Gastrocnemius medialis (tissue), 4 donors: ENCODE measurements at regions of chr16 and their contacts with region 1.

Region 1: GRCh38 chr16:87842209-87842869 is 27.0 kb downstream of the SLC7A5 start:
- DNase-seq: no peak
- ATAC-seq: no peak
- H3K4me3 ChIP-seq: no peak overlapping the region
- H3K27ac ChIP-seq: no peak overlapping the region
- H3K4me1 ChIP-seq: peaks cover 7 to 30% of the 10 kb centered on the region in 2 donors
- H3K27me3 ChIP-seq: no peaks in the 10 kb centered on the region
- CTCF ChIP-seq: no peak
- POLR2A ChIP-seq: no peak

Region 2: GRCh38 chr16:87757915-87758314 is 84.4 kb before region 1 on chr16:
- in situ Hi-C with region 1: no loop called
- intact Hi-C with region 1: no loop called
- DNase-seq: no peak
- ATAC-seq: no peak
- H3K4me3 ChIP-seq: no peak overlapping the region
- H3K27ac ChIP-seq: no peak overlapping the region
- H3K4me1 ChIP-seq: no peaks in the 10 kb centered on the region
- H3K27me3 ChIP-seq: no peaks in the 10 kb centered on the region
- CTCF ChIP-seq: no peak
- POLR2A ChIP-seq: no peak

Region 3: GRCh38 chr16:87778830-87779579 is 63.3 kb before region 1 on chr16:
- in situ Hi-C with region 1: no loop called
- intact Hi-C with region 1: no loop called
- DNase-seq: peak; percentile 67 to 84
- ATAC-seq: peak; percentile 79 to 90
- H3K4me3 ChIP-seq: no peak overlapping the region
- H3K27ac ChIP-seq: peak overlapping the region in 2 of 4 donors; percentile 15 to 21
- H3K4me1 ChIP-seq: peaks cover 5 to 10% of the 10 kb centered on the region in 2 donors
- H3K27me3 ChIP-seq: peaks cover 0 to 3% (median 0%) of the 10 kb centered on the region in 3 donors
- CTCF ChIP-seq: peak; percentile 96 to 100 (median 97)
- POLR2A ChIP-seq: no peak

Region 4: GRCh38 chr16:87828071-87828971 is 14.0 kb before region 1 on chr16:
- in situ Hi-C with region 1: no loop called
- intact Hi-C with region 1: loop called (anchors 1 kb)
- DNase-seq: no peak
- ATAC-seq: peak in 1 of 2 donors; percentile 13
- H3K4me3 ChIP-seq: no peak overlapping the region
- H3K27ac ChIP-seq: no peak overlapping the region
- H3K4me1 ChIP-seq: no peaks in the 10 kb centered on the region
- H3K27me3 ChIP-seq: no peaks in the 10 kb centered on the region
- CTCF ChIP-seq: no peak
- POLR2A ChIP-seq: peak in 1 of 2 donors; percentile 5

Region 5: GRCh38 chr16:88063211-88063773 is 221.0 kb after region 1 on chr16:
- in situ Hi-C with region 1: no loop called
- intact Hi-C with region 1: no loop called
- DNase-seq: no peak
- ATAC-seq: peak; percentile 29 to 42
- H3K4me3 ChIP-seq: no peak overlapping the region
- H3K27ac ChIP-seq: no peak overlapping the region
- H3K4me1 ChIP-seq: peaks cover 7 to 16% of the 10 kb centered on the region in 2 donors
- H3K27me3 ChIP-seq: no peaks in the 10 kb centered on the region
- CTCF ChIP-seq: no peak
- POLR2A ChIP-seq: no peak